ENCODE measurements at regions of chr3 and their contacts with region 1.

Region 1: DNA sequence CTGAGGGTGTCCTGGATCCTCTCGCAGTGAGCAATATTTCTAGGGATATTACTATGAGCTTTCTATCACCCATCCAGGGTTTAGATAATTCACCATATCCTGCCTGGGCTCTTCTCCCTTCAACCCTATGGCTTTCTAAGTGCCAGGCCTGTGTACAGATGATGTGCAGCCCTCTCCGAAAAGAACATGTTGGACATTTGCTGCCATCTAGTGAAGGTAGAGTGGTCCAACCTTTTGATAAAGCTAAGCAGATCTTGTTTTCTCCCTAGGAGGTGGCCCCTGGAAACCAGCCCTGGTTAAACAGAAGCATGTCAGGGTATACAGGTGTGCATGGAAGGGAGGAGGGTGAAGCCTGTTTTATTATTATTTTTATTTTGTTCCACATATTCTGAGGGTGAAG is 27.9 kb upstream of the SCN10A start:
- DNase-seq: peak in 2 of 4 experiments; percentile 27 to 57
- ATAC-seq: peak; percentile 95
- H3K4me3 ChIP-seq: no peak overlapping the region
- H3K27ac ChIP-seq: no peak overlapping the region
- H3K4me1 ChIP-seq: no peaks in the 10 kb centered on the region
- H3K27me3 ChIP-seq: peaks cover 0 to 4% of the 10 kb centered on the region in 2 experiments; a peak in 2 of 5 replicates
- CTCF ChIP-seq: peak; percentile 47 to 76 (median 63); a peak in 4 of 6 replicates
- EP300 ChIP-seq: no peak
- POLR2A ChIP-seq: no peak
- RAD21 ChIP-seq: peak; percentile 82 to 83

Region 2: GRCh38 chr3:38496131-38496910 is 347.6 kb before region 1 on chr3 and contains the start of gene EXOG:
- CTCF ChIA-PET with region 1: interaction called, 3 read pairs
- POLR2A ChIA-PET with region 1: no interaction called
- in situ Hi-C with region 1: no loop called
- intact Hi-C with region 1: loop called (anchors 10 kb)
- DNase-seq: peak; percentile 97 to 100 (median 100)
- ATAC-seq: peak; percentile 99
- H3K4me3 ChIP-seq: peak within 1 kb of the TSS; percentile 63
- H3K27ac ChIP-seq: peak within 1 kb of the TSS; percentile 69
- H3K4me1 ChIP-seq: peaks cover 4 to 5% of the 10 kb centered on the region in 2 experiments; a peak in 4 of 5 replicates
- H3K27me3 ChIP-seq: no peaks in the 10 kb centered on the region
- CTCF ChIP-seq: peak; percentile 87 to 96 (median 90)
- EP300 ChIP-seq: peak; percentile 12; the same call in 1 of the 2 replicates
- POLR2A ChIP-seq: peak; percentile 86
- RAD21 ChIP-seq: peak; percentile 82 to 83
- polyA plus RNA-seq, gene EXOG: 13.1 to 21.7 TPM

Region 3: DNA sequence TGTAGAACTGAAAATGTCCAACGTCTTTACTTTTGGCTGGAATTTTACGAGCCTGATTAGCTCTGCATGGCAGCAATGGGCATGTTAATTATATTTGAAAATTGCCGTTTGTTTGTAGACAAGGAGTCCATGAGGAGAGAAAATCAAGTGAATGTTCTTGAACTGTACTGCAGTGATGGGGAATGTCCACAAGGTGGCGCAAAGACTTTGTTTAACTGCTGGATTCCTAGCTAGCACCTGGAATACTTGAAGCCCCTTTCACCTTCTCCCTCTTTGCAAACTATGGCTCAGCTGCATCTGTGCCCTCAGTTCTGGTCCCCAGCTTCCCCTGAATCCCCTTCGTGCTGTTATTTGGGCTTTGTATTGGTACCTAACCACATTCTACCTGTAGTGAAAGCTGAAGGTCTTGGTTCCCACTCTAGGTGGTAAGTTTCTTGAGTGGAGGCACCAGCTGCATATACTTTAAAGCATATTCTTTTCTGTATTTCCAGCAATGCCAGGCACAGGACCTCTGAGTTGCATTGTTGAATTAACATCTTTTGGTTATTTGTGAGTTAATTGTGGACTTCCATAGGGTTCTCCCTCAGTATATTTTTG is 322.4 kb before region 1 on chr3:
- CTCF ChIA-PET with region 1: interaction called, 4 read pairs
- POLR2A ChIA-PET with region 1: no interaction called
- in situ Hi-C with region 1: no loop called
- intact Hi-C with region 1: loop called (anchors 5 kb)
- DNase-seq: peak; percentile 65 to 86 (median 67)
- ATAC-seq: peak; percentile 87
- H3K4me3 ChIP-seq: no peak overlapping the region
- H3K27ac ChIP-seq: no peak overlapping the region
- H3K4me1 ChIP-seq: no peaks in the 10 kb centered on the region
- H3K27me3 ChIP-seq: no peaks in the 10 kb centered on the region
- CTCF ChIP-seq: peak; percentile 83 to 94 (median 91)
- EP300 ChIP-seq: no peak
- POLR2A ChIP-seq: no peak
- RAD21 ChIP-seq: peak; percentile 75 to 85

Region 4: DNA sequence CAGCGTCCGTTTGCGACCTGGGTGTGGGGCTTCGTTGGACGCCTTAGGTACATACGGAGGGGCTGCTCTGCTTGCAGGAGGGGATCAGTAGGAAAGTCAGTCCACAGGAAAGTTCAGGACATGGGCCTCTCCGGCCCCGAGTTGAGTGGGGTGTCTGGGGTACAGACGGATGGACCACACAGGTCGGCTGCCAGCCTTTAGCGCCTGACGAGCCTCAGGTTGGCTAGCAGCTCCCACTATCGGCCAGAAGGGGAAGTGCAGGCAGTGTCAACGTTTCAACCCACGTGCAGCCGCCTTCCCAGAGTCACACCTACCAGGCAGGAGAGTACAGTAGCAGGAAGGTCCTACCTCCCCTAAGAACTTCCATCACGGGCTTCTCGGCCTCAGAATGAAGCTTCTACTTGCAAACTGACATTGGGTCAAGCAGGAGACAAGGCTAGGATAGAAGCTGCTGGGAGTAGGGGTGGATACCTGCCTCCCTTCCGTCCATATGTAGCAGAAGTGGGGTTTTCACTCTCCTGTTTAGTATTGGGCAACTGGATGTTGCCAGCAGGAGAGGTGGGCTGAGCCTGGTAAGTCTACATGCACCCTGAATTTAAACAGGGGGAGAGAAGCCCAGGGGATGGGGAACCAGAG is 192.6 kb before region 1 on chr3:
- CTCF ChIA-PET with region 1: interaction called, 5 read pairs
- POLR2A ChIA-PET with region 1: interaction called, 3 read pairs
- in situ Hi-C with region 1: loop called (anchors 5 kb)
- intact Hi-C with region 1: loop called (anchors 5 kb)
- DNase-seq: peak; percentile 78 to 86 (median 84)
- ATAC-seq: peak; percentile 76
- H3K4me3 ChIP-seq: no peak overlapping the region
- H3K27ac ChIP-seq: no peak overlapping the region
- H3K4me1 ChIP-seq: peaks cover 6 to 18% of the 10 kb centered on the region in 2 experiments
- H3K27me3 ChIP-seq: peaks cover 14 to 34% of the 10 kb centered on the region in 2 experiments; a peak in 4 of 5 replicates
- CTCF ChIP-seq: peak; percentile 95 to 99 (median 97)
- EP300 ChIP-seq: no peak
- POLR2A ChIP-seq: no peak
- RAD21 ChIP-seq: peak; percentile 66 to 82

Region 5: DNA sequence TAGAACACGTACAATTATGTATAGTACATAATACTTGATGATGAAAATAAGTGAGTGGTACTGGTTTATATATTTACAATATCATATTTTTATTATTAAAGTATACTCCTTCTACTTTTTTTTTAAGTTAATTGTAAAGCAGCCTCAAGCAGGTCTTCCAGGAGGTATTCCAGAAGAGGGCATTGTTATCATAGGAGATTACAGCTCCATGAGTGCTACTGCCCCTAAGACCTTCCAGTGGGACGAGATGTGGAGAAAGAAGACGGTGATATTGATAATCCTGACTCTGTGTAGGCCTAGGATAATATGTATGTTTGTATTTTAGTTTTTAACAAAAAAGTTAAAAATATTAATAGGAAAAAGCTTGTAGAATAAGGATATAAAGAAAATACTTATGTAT is 154.1 kb before region 1 on chr3:
- CTCF ChIA-PET with region 1: interaction called, 5 read pairs
- POLR2A ChIA-PET with region 1: no interaction called
- in situ Hi-C with region 1: no loop called
- intact Hi-C with region 1: loop called (anchors 2 kb)
- DNase-seq: peak in 1 of 4 experiments; percentile 18
- ATAC-seq: peak; percentile 64
- H3K4me3 ChIP-seq: no peak overlapping the region
- H3K27ac ChIP-seq: no peak overlapping the region
- H3K4me1 ChIP-seq: no peaks in the 10 kb centered on the region
- H3K27me3 ChIP-seq: peaks cover 7% of the 10 kb centered on the region in 2 experiments; a peak in 4 of 5 replicates
- CTCF ChIP-seq: peak in 1 of 3 experiments; percentile 41; a peak in 2 of 6 replicates
- EP300 ChIP-seq: no peak
- POLR2A ChIP-seq: no peak
- RAD21 ChIP-seq: peak; percentile 44 to 50

Region 6: GRCh38 chr3:38738630-38739395 is 105.1 kb before region 1 on chr3:
- CTCF ChIA-PET with region 1: interaction called, 4 read pairs
- POLR2A ChIA-PET with region 1: no interaction called
- in situ Hi-C with region 1: no loop called
- intact Hi-C with region 1: loop called (anchors 2 kb)
- DNase-seq: peak; percentile 67 to 75 (median 68)
- ATAC-seq: peak; percentile 92
- H3K4me3 ChIP-seq: no peak overlapping the region
- H3K27ac ChIP-seq: no peak overlapping the region
- H3K4me1 ChIP-seq: peaks cover 4 to 11% of the 10 kb centered on the region in 2 experiments; a peak in 3 of 5 replicates
- H3K27me3 ChIP-seq: peaks cover 2 to 8% of the 10 kb centered on the region in 2 experiments; a peak in 4 of 5 replicates
- CTCF ChIP-seq: peak; percentile 77 to 84 (median 84)
- EP300 ChIP-seq: no peak
- POLR2A ChIP-seq: no peak
- RAD21 ChIP-seq: peak; percentile 45 to 74

Region 7: GRCh38 chr3:39038165-39038564 is 194.3 kb after region 1 on chr3:
- CTCF ChIA-PET with region 1: no interaction called
- POLR2A ChIA-PET with region 1: no interaction called
- in situ Hi-C with region 1: no loop called
- intact Hi-C with region 1: loop called (anchors 5 kb)
- DNase-seq: no peak
- ATAC-seq: no peak
- H3K4me3 ChIP-seq: no peak overlapping the region
- H3K27ac ChIP-seq: no peak overlapping the region
- H3K4me1 ChIP-seq: no peaks in the 10 kb centered on the region
- H3K27me3 ChIP-seq: peaks cover 0 to 7% of the 10 kb centered on the region in 2 experiments; a peak in 1 of 5 replicates
- CTCF ChIP-seq: no peak
- EP300 ChIP-seq: no peak
- POLR2A ChIP-seq: no peak
- RAD21 ChIP-seq: no peak

Region 8: DNA sequence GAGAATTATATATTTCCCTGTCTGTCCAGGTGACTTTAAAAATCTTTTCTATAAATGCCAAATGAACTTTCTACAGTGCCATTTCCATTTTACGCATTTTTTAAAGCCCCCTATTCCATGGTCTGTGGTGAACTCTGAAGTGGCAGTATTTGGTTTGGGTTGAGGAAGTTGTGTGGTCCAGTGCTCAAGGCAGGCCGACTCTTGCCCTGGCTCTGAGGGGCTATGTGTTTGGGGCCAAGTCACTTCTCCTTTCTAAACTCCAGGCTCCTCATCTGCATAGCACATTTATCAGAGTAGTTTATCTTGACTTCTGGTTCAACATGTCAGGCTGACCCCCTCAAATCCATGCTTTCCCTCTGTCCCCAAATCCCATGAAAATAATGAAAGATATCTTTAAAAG is 277.7 kb after region 1 on chr3:
- CTCF ChIA-PET with region 1: no interaction called
- POLR2A ChIA-PET with region 1: no interaction called
- in situ Hi-C with region 1: no loop called
- intact Hi-C with region 1: no loop called
- DNase-seq: no peak
- ATAC-seq: no peak
- H3K4me3 ChIP-seq: no peak overlapping the region
- H3K27ac ChIP-seq: no peak overlapping the region
- H3K4me1 ChIP-seq: no peaks in the 10 kb centered on the region; a peak in 1 of 5 replicates
- H3K27me3 ChIP-seq: no peaks in the 10 kb centered on the region
- CTCF ChIP-seq: no peak
- EP300 ChIP-seq: no peak
- POLR2A ChIP-seq: no peak
- RAD21 ChIP-seq: no peak

Measured in K562 (cell line).